ENCODE measurements at regions of chr6 and their contacts with region 1.

Region 1: GRCh38 chr6:33585403-33586107 is 5.5 kb upstream of the BAK1 start:
- DNase-seq: peak; percentile 80 to 91 (median 84)
- ATAC-seq: peak; percentile 30 to 67 (median 64)
- H3K4me3 ChIP-seq: peak overlapping the region in 5 of 12 donors; percentile 13 to 29 (median 23)
- H3K27ac ChIP-seq: peak overlapping the region in 9 of 12 donors; percentile 18 to 43 (median 24)
- H3K4me1 ChIP-seq: peaks cover 2 to 38% (median 29%) of the 10 kb centered on the region in 12 donors
- H3K27me3 ChIP-seq: no peaks in the 10 kb centered on the region
- CTCF ChIP-seq: peak; percentile 95 to 100 (median 99)
- POLR2A ChIP-seq: no peak

Region 2: DNA sequence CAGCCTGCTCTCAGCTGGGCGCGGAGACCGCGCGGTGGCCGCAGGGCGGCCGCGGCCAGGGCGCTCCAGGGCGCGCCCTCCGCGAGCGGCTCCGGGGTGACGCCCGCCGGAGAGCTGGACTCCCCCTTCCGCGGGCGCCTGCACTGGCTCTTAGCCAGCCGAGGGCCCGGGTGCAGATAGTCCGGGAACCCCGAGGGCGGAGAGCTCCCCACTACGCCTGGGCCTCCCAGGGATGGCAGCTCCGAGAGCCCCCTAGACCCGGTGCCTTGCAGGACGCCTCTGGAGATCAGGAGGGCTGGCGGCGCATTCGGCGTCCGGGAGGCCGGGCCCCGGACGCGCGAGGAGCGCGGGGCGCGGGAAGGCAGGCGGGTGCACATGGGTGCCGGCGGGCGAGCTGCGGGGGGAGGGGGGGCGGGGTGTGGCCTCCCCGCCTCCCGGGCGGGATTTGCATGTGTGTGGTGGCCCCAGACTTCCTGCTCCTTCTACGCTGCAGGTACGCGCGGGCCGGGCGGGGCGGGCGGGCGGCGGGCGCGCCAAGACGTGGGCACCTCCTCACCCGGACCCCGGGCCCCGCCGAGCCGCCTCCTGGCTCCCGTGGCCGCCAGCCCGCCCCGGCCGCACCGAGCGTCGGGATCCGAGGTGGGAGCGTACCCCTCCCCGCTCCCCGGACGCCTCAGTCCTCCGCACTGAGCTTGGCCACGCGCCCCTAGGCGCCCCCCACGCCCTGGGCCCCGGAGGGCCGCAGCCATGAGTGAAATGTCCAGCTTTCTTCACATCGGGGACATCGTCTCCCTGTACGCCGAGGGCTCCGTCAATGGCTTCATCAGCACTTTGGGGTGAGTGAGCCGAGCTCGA is 35.5 kb after region 1 on chr6 and contains the start of gene ITPR3:
- intact Hi-C with region 1: loop called in 3 of 10 experiments (anchors 2 to 5 kb)
- DNase-seq: peak; percentile 49 to 77 (median 57)
- ATAC-seq: peak; percentile 16 to 66 (median 52)
- H3K4me3 ChIP-seq: peak within 1 kb of the TSS; percentile 47 to 86 (median 68)
- H3K27ac ChIP-seq: peak within 1 kb of the TSS; percentile 76 to 97 (median 90)
- H3K4me1 ChIP-seq: peaks cover 0 to 47% (median 17%) of the 10 kb centered on the region in 12 donors
- H3K27me3 ChIP-seq: peaks cover 0 to 8% (median 4%) of the 10 kb centered on the region in 9 donors
- CTCF ChIP-seq: no peak
- POLR2A ChIP-seq: peak in 1 of 2 donors; percentile 26
- total RNA-seq, gene ITPR3: 4.8 to 33.5 (median 7.8) TPM

Region 3: DNA sequence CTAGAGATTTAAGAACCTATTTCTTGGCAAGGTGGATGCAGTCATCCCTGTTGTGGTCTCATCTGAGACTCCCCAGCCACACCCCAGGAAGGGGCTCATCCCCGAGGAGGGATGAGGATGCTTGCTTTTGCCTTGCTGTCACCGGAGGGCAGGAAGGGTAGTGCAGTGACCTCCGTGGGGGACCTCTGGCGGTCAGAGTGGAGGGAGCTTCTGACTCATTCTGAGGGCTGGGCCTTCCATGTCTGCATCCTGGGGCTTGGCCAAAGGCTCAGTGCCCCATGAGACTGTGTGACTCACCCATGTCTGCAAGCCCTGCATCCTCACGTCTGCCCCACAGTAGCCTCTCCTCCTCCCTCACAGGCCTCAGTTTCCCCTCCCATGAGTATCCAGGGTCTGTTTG is 87.3 kb after region 1 on chr6:
- intact Hi-C with region 1: loop called in 8 of 10 experiments (anchors 2 to 10 kb)
- DNase-seq: peak; percentile 80 to 95 (median 89)
- ATAC-seq: peak; percentile 93 to 98 (median 96)
- H3K4me3 ChIP-seq: no peak overlapping the region
- H3K27ac ChIP-seq: no peak overlapping the region
- H3K4me1 ChIP-seq: peaks cover 0 to 13% (median 6%) of the 10 kb centered on the region in 12 donors
- H3K27me3 ChIP-seq: no peaks in the 10 kb centered on the region
- CTCF ChIP-seq: peak; percentile 20 to 73 (median 59)
- POLR2A ChIP-seq: no peak

Region 4: DNA sequence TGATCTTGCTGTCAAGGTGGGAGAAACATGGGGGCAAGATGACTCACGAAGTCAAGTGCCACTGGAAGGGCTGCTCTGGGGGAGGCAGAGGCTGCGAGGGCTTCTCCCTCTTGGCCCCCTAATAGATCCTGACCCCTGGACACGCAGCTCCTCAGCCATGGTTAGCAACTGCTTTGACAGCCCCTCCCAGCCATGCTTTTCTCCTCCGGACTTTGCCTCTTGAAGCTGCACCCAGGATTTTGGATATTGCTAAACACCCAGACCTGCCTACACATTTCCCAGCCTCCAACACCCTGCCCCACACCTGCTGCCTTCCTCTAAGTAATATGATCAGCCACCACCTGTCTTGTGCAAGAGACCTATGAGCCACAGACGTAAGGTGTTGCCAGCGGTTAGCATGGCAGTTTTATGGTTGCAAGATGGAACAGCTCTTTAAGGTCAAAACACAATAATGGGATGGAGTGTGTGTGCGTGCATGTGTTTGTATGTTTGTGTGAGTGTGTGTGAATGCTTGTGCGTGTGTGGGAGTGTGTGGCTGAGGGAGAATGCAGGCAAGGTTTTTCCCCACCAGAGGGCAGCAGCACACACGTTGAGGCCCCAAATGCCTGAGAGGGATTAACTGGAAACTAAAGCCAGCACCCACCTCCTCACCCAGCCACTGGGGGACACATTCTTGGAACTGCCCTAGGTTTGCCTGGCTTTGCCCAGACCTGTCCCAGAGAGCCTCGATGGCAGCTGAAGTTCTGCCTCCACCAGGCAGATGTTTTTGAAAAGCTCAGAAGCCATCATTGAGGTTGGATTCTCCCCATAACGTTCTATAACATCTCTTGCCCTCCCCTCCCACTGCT is 158.7 kb after region 1 on chr6:
- intact Hi-C with region 1: loop called in 1 of 10 experiments (anchors 5 kb)
- DNase-seq: peak in 4 of 5 donors; percentile 59 to 72 (median 70)
- ATAC-seq: peak in 3 of 4 donors; percentile 6 to 34 (median 20)
- H3K4me3 ChIP-seq: peak overlapping the region in 11 of 12 donors; percentile 42 to 80 (median 57)
- H3K27ac ChIP-seq: peak overlapping the region; percentile 74 to 99 (median 92)
- H3K4me1 ChIP-seq: peaks cover 0 to 68% (median 26%) of the 10 kb centered on the region in 12 donors
- H3K27me3 ChIP-seq: peaks cover 0 to 5% (median 0%) of the 10 kb centered on the region in 9 donors
- CTCF ChIP-seq: peak; percentile 77 to 90 (median 86)
- POLR2A ChIP-seq: peak in 1 of 2 donors; percentile 18

Region 5: DNA sequence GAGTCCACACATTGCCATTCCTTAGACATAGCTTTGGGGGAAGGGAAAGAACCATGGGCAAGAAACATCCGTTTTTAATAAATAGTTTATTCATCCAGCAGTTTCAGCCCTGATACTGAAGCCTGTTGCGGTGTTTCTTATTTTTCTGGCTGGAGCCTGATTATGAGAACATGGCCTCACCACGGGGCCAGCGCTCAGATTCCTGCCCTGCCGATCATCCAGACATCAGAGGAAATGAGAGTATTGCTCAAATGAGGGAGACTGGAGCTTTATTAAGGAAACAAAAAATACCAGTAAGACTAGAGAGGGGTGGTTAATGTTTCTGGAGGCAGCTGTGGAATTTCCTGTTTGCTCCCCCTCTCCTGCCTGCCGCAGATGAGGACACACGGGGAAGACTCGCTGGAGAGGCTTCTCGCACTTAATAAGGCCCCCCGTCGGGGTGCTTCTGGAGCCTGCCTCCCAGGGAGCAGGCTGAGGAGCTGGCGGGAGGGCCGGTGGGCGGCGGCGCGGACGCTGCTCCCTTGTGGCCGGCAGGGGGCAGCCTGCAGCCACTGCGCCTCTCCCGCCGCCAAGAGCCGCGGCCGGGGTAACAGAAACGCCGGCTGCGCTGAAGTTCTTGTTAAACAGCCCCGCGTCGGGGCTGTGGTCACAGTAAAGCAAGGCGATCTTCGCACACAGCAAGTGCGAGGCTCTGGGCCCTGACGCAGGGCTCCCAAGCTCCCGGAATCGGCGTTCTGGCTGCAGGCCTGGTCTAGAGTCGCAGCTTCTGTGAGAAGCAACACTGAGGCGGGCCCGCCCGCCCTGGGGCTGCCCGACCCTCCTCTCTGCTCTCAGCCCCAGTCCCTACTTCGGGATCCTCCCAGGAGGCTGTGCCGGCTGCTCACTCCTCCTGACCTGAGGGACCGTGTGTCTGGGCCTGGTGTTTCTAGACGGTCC is 185.9 kb after region 1 on chr6:
- intact Hi-C with region 1: loop called in 2 of 10 experiments (anchors 5 to 10 kb)
- DNase-seq: peak; percentile 65 to 88 (median 75)
- ATAC-seq: peak; percentile 44 to 85 (median 76)
- H3K4me3 ChIP-seq: peak overlapping the region in 4 of 12 donors; percentile 8 to 28 (median 18)
- H3K27ac ChIP-seq: peak overlapping the region in 11 of 12 donors; percentile 2 to 74 (median 50)
- H3K4me1 ChIP-seq: peaks cover 0 to 37% (median 27%) of the 10 kb centered on the region in 12 donors
- H3K27me3 ChIP-seq: no peaks in the 10 kb centered on the region
- CTCF ChIP-seq: peak; percentile 92 to 99 (median 97)
- POLR2A ChIP-seq: no peak

Measured in heart left ventricle (tissue), 16 donors.